ENCODE measurements at regions of chr3 and their contacts with region 1.

Region 1: GRCh38 chr3:11185564-11186317 is 31.4 kb downstream of the HRH1 start:
- DNase-seq: peak; percentile 90
- H3K4me3 ChIP-seq: peak overlapping the region; percentile 4 to 30 (median 7)
- H3K27ac ChIP-seq: peak overlapping the region; percentile 60
- H3K4me1 ChIP-seq: peaks cover 27% of the 10 kb centered on the region
- H3K27me3 ChIP-seq: no peaks in the 10 kb centered on the region
- CTCF ChIP-seq: peak in 1 of 2 donors; percentile 11

Region 2: DNA sequence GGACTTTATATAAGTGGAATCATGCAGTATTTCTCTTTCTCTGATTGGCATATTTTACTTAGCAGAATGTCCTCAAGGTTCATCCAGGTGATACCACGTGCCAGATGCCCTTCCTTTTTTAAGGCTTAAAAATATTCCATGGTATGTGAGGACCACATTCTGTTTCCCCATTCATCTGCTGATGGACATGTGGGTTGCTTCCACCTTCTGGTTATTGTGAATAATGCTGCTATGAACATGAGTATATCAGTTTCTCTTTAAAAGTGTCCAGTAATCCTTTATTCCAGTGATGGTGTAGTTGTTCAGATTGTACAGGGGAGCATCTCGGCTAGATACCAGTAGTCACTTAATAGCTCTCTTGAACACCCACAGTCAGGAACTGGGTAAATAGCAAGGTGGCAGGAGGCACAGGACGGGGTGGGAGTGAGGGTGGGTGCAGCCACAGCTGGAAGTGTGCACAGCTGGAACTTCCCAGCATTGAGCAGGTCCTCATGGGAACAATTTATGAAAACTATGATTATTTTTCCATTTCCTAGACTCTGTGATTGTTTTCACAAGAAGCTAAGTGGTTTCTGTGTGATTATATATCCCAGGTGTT is 36.2 kb after region 1 on chr3:
- CTCF ChIA-PET with region 1: no interaction called
- dilution Hi-C with region 1: no loop called
- in situ Hi-C with region 1: no loop called
- intact Hi-C with region 1: no loop called
- DNase-seq: no peak
- H3K4me3 ChIP-seq: no peak overlapping the region
- H3K27ac ChIP-seq: no peak overlapping the region
- H3K4me1 ChIP-seq: peaks cover 16% of the 10 kb centered on the region
- H3K27me3 ChIP-seq: no peaks in the 10 kb centered on the region
- CTCF ChIP-seq: peak in 1 of 2 donors; percentile 29

Region 3: DNA sequence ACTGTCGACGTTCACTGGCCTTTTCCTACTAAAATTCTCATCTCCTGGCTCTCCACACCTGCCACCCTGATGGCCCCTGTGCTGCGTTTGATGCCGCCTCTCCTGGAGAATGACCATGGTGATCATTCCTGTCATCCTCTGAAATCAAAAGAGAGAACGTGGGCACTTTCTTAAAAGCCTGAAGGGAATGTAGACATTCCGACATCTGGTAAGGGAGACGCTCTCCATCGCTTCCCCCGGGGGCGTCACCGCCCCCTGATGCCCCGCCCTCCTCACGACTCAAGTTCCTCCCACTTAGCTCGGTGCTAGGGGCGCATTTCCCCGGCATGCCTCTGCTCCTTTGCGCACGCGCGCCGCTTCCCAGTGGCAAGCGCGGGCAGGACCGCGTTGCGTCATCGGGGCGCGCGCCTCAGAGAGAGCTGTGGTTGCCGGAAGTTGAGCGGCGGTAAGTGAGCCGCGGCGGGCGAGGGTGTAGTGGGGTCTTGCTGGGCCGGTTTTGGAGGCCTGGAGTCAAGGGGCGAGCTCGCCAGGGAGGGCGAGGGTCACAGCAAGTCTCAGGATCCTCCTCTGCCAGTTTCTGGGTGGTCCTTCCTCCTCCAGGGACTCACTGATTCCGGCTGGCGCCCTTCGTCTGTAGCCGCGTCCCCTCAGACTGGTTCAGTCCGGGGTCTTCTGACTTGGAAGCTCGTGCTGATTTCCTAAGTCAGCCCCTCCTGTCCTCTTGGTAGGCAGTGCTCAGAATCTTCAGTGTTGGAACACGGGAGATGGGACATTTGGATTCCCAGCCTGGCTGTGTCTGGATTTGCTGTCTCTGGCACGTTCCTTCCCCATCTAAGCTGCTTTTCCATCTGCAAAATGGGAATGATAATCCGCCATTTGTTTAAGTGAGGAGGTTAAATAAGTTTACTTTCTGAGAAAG is 86.5 kb after region 1 on chr3 and contains the start of gene ATG7:
- CTCF ChIA-PET with region 1: no interaction called
- dilution Hi-C with region 1: loop called (anchors 5 kb)
- in situ Hi-C with region 1: no loop called
- intact Hi-C with region 1: no loop called
- DNase-seq: peak; percentile 92
- H3K4me3 ChIP-seq: peak within 1 kb of the TSS; percentile 83 to 91 (median 91)
- H3K27ac ChIP-seq: peak within 1 kb of the TSS; percentile 96
- H3K4me1 ChIP-seq: peaks cover 13% of the 10 kb centered on the region
- H3K27me3 ChIP-seq: no peaks in the 10 kb centered on the region
- CTCF ChIP-seq: peak in 1 of 2 donors; percentile 12
- total RNA-seq, gene ATG7: 35.3 to 51.2 TPM

Region 4: GRCh38 chr3:11452885-11453847 is 267.4 kb after region 1 on chr3:
- CTCF ChIA-PET with region 1: no interaction called
- dilution Hi-C with region 1: no loop called
- in situ Hi-C with region 1: no loop called
- intact Hi-C with region 1: no loop called
- DNase-seq: peak; percentile 25
- H3K4me3 ChIP-seq: no peak overlapping the region
- H3K27ac ChIP-seq: no peak overlapping the region
- H3K4me1 ChIP-seq: no peaks in the 10 kb centered on the region
- H3K27me3 ChIP-seq: no peaks in the 10 kb centered on the region
- CTCF ChIP-seq: no peak

Region 5: GRCh38 chr3:12135029-12135657 is 949.4 kb after region 1 on chr3:
- CTCF ChIA-PET with region 1: no interaction called
- dilution Hi-C with region 1: no loop called
- in situ Hi-C with region 1: no loop called
- intact Hi-C with region 1: no loop called
- DNase-seq: peak; percentile 39
- H3K4me3 ChIP-seq: no peak overlapping the region
- H3K27ac ChIP-seq: no peak overlapping the region
- H3K4me1 ChIP-seq: no peaks in the 10 kb centered on the region
- H3K27me3 ChIP-seq: peaks cover 8% of the 10 kb centered on the region
- CTCF ChIP-seq: peak; percentile 95